ENCODE measurements at regions of chr3 and their contacts with region 1.

Region 1: GRCh38 chr3:166902374-166902773 is 477.7 kb downstream of the ZBBX start:
- DNase-seq: no peak
- H3K4me3 ChIP-seq: no peak overlapping the region
- H3K27ac ChIP-seq: no peak overlapping the region
- H3K4me1 ChIP-seq: no peaks in the 10 kb centered on the region
- H3K27me3 ChIP-seq: no peaks in the 10 kb centered on the region
- CTCF ChIP-seq: peak; percentile 55

Region 2: GRCh38 chr3:165854696-165855095 is 1047.7 kb before region 1 on chr3:
- CTCF ChIA-PET with region 1: no interaction called
- POLR2A ChIA-PET with region 1: no interaction called
- intact Hi-C with region 1: loop called (anchors 10 kb)
- DNase-seq: peak; percentile 3 to 42
- H3K4me3 ChIP-seq: no peak overlapping the region
- H3K27ac ChIP-seq: no peak overlapping the region
- H3K4me1 ChIP-seq: no peaks in the 10 kb centered on the region
- H3K27me3 ChIP-seq: no peaks in the 10 kb centered on the region
- CTCF ChIP-seq: peak; percentile 86

Region 3: GRCh38 chr3:166986000-166986399 is 83.6 kb after region 1 on chr3:
- CTCF ChIA-PET with region 1: no interaction called
- POLR2A ChIA-PET with region 1: no interaction called
- intact Hi-C with region 1: no loop called
- DNase-seq: no peak
- H3K4me3 ChIP-seq: no peak overlapping the region
- H3K27ac ChIP-seq: no peak overlapping the region
- H3K4me1 ChIP-seq: no peaks in the 10 kb centered on the region
- H3K27me3 ChIP-seq: no peaks in the 10 kb centered on the region
- CTCF ChIP-seq: no peak

Measured in PC-9 (cell line).